CD4-positive, alpha-beta T cell (primary cell): ENCODE measurements at regions of chr6 and their contacts with region 1.

Region 1: DNA sequence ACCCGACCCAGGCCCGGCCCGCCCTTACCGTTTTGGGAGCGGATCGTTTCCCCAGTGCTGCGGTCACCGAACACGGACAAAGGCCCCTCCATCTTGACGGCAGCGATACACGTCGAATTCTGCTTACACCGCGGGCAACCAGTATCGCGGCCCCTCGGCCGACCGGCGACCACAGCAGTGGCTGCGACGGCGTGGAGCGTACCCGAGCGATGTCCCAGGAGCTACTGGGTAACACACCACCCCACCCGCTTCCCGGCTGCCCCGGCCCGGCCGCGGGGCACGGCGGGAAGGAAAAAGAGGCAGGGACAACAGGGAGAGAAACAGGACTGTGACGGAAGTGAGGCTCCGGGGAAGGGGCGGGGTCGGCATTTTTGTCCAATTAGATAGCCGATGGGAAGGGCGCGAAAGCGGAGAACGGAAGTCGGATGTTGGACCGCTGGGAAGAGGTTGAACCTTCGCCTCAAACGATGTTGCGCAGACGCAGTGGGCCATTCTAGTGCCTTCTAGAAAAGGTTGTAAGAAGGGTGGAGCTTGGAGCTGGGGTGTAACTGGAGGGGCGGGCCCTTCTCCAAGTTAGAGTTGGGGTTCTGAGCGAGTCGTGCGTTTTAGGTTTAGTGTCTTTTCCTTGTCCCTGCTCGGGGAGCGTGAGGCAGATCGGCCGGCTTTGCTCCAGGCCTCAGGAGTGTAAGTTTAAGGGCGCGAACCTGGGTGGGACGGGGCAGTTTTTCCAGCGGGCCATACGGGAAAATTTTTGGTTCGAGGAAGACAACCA is at the start of gene TCP1:
- DNase-seq: peak; percentile 95 to 100 (median 99)
- ATAC-seq: peak; percentile 83
- H3K4me3 ChIP-seq: peak within 1 kb of the TSS; percentile 84
- H3K4me3 Mint-ChIP-seq: peak within 1 kb of the TSS; percentile 99
- H3K27ac ChIP-seq: peak within 1 kb of the TSS; percentile 88 to 97
- H3K27ac Mint-ChIP-seq: peak within 1 kb of the TSS; percentile 95
- H3K4me1 ChIP-seq: peaks cover 37% of the 10 kb centered on the region
- H3K4me1 Mint-ChIP-seq: peaks cover 73% of the 10 kb centered on the region
- H3K27me3 ChIP-seq: no peaks in the 10 kb centered on the region
- H3K27me3 Mint-ChIP-seq: no peaks in the 10 kb centered on the region
- CTCF ChIP-seq: no peak
- total RNA-seq, gene TCP1: 212 to 216 TPM

Region 2: GRCh38 chr6:159761873-159762680 is 27.5 kb before region 1 on chr6 and contains the start of gene ACAT2:
- CTCF ChIA-PET with region 1: interaction called, 4 read pairs
- POLR2A ChIA-PET with region 1: interaction called, 95 read pairs
- intact Hi-C with region 1: loop called (anchors 1 kb)
- DNase-seq: peak; percentile 80 to 97 (median 90)
- ATAC-seq: peak; percentile 89
- H3K4me3 ChIP-seq: peak within 1 kb of the TSS; percentile 100
- H3K4me3 Mint-ChIP-seq: peak within 1 kb of the TSS; percentile 98
- H3K27ac ChIP-seq: peak within 1 kb of the TSS; percentile 94 to 99
- H3K27ac Mint-ChIP-seq: peak within 1 kb of the TSS; percentile 97
- H3K4me1 ChIP-seq: peaks cover 21% of the 10 kb centered on the region
- H3K4me1 Mint-ChIP-seq: peaks cover 34% of the 10 kb centered on the region
- H3K27me3 ChIP-seq: no peaks in the 10 kb centered on the region
- H3K27me3 Mint-ChIP-seq: no peaks in the 10 kb centered on the region
- CTCF ChIP-seq: no peak
- total RNA-seq, gene ACAT2: 21.4 to 25.8 TPM

Region 3: DNA sequence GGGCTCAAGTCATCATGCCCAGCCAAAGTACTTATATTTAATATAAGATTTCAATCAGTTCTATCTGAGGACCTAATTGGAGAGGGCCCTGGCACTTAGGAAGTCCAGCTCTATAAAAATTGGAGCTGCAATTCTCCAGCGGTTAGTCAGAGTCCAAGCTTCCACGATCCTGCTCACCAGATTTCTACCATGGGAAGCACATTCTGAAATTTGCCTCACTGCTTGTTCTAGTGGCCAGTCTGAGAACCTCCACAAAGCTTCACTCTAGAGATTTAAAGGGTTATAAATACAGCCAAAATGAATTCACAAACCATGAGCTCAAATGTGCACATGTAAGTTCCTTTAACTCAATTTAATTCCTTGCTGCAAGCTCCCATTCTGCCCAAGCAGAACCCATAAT is 44.0 kb after region 1 on chr6:
- CTCF ChIA-PET with region 1: no interaction called
- POLR2A ChIA-PET with region 1: interaction called, 11 read pairs
- intact Hi-C with region 1: no loop called
- DNase-seq: no peak
- ATAC-seq: no peak
- H3K4me3 ChIP-seq: no peak overlapping the region
- H3K4me3 Mint-ChIP-seq: no peak overlapping the region
- H3K27ac ChIP-seq: no peak overlapping the region
- H3K27ac Mint-ChIP-seq: peak overlapping the region; percentile 58
- H3K4me1 ChIP-seq: peaks cover 23% of the 10 kb centered on the region
- H3K4me1 Mint-ChIP-seq: peaks cover 47% of the 10 kb centered on the region
- H3K27me3 ChIP-seq: no peaks in the 10 kb centered on the region
- H3K27me3 Mint-ChIP-seq: no peaks in the 10 kb centered on the region
- CTCF ChIP-seq: no peak

Region 4: DNA sequence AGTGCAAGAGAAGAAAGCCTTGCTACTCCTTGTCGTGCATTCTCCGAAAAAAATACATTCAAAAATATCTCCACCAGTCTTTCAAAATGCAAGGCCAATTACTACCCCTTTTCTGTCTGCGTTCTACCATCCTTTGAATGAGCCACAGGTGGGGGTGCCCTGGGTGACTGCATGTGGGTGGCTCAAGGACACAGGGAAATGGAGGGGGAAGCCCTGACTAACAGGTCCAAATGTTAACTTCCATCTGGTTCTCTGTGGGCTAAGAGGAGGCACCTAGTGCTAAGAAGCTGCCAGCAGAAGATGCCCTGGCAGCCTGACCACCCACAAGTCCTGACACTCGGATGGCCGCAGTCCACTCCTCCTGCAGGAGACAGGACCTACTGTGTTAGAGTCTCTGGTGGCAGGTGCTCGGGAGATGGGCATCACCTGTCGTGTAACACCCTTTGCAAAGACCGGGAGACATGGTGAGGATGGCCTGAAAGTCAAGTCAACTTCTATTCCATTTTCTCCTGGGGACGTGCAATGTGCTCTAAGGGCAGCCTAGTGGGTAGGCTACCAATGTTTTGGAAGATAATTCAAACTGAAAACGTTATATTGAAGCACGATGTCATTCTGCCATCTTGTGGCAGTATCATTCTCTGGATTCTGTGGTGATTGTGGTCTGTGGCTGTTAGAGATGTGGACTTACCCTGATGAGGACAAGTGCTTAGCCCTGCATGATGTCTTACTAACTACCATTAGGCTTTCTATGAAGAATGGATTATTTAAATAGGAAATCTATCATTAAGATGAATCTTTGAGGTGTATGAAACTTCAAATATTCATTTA is 151.9 kb after region 1 on chr6:
- CTCF ChIA-PET with region 1: no interaction called
- POLR2A ChIA-PET with region 1: no interaction called
- intact Hi-C with region 1: loop called in 1 of 2 experiments (anchors 10 kb)
- DNase-seq: peak in 8 of 14 experiments; percentile 5 to 80 (median 22)
- ATAC-seq: peak; percentile 82
- H3K4me3 ChIP-seq: no peak overlapping the region
- H3K4me3 Mint-ChIP-seq: no peak overlapping the region
- H3K27ac ChIP-seq: no peak overlapping the region
- H3K27ac Mint-ChIP-seq: no peak overlapping the region
- H3K4me1 ChIP-seq: peaks cover 4% of the 10 kb centered on the region
- H3K4me1 Mint-ChIP-seq: peaks cover 8% of the 10 kb centered on the region
- H3K27me3 ChIP-seq: no peaks in the 10 kb centered on the region
- H3K27me3 Mint-ChIP-seq: peaks cover 5% of the 10 kb centered on the region
- CTCF ChIP-seq: peak; percentile 46

Region 5: GRCh38 chr6:160469153-160469552 is 679.6 kb after region 1 on chr6:
- CTCF ChIA-PET with region 1: no interaction called
- POLR2A ChIA-PET with region 1: no interaction called
- intact Hi-C with region 1: no loop called
- DNase-seq: no peak
- ATAC-seq: no peak
- H3K4me3 ChIP-seq: no peak overlapping the region
- H3K4me3 Mint-ChIP-seq: no peak overlapping the region
- H3K27ac ChIP-seq: no peak overlapping the region
- H3K27ac Mint-ChIP-seq: no peak overlapping the region
- H3K4me1 ChIP-seq: peaks cover 10% of the 10 kb centered on the region
- H3K4me1 Mint-ChIP-seq: peaks cover 26% of the 10 kb centered on the region
- H3K27me3 ChIP-seq: no peaks in the 10 kb centered on the region
- H3K27me3 Mint-ChIP-seq: peaks cover 14% of the 10 kb centered on the region
- CTCF ChIP-seq: no peak